MCF 10A (cell line): ENCODE measurements at regions of chr3 and their contacts with region 1.

Region 1: DNA sequence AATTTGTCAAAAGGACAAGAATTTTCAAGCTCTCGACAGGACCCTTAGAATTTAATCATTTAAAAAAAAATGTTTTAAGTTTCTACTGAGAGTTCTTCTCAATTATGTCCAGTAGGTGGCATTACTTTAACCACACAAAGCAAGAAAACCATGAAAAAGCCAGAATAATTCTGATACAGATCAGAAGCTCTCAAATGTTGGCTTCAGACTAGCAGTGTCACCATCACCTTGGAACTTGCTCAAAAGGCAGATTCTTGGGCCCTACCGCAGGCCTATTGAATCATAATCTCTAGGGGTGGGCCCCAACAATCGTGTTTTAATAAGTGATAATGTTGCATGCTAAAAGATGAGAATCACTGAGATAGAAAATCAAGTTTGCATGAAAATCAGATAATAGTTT is 99.5 kb upstream of the KCNMB2 start:
- DNase-seq: peak; percentile 37
- H3K4me3 Mint-ChIP-seq: no peak overlapping the region
- H3K27ac Mint-ChIP-seq: no peak overlapping the region
- H3K4me1 Mint-ChIP-seq: peaks cover 11% of the 10 kb centered on the region
- H3K27me3 Mint-ChIP-seq: no peaks in the 10 kb centered on the region
- CTCF ChIP-seq: peak; percentile 50

Region 2: GRCh38 chr3:178419071-178419470 is 17.7 kb before region 1 on chr3:
- CTCF ChIA-PET with region 1: interaction called, 11 read pairs
- POLR2A ChIA-PET with region 1: interaction called, 3 read pairs
- intact Hi-C with region 1: no loop called
- DNase-seq: peak; percentile 65
- H3K4me3 Mint-ChIP-seq: peak overlapping the region; percentile 57
- H3K27ac Mint-ChIP-seq: peak overlapping the region; percentile 94
- H3K4me1 Mint-ChIP-seq: peaks cover 14% of the 10 kb centered on the region
- H3K27me3 Mint-ChIP-seq: no peaks in the 10 kb centered on the region
- CTCF ChIP-seq: no peak

Region 3: GRCh38 chr3:178947738-178948137 is 511.0 kb after region 1 on chr3:
- CTCF ChIA-PET with region 1: interaction called, 13 read pairs
- POLR2A ChIA-PET with region 1: interaction called, 3 read pairs
- intact Hi-C with region 1: no loop called
- DNase-seq: no peak
- H3K4me3 Mint-ChIP-seq: no peak overlapping the region
- H3K27ac Mint-ChIP-seq: no peak overlapping the region
- H3K4me1 Mint-ChIP-seq: peaks cover 6% of the 10 kb centered on the region
- H3K27me3 Mint-ChIP-seq: no peaks in the 10 kb centered on the region
- CTCF ChIP-seq: peak; percentile 7